CD4-positive, alpha-beta T cell (primary cell): ENCODE measurements at regions of chr4 and their contacts with region 1.

Region 1: GRCh38 chr4:4260253-4260652 is 12.2 kb upstream of the TMEM128 start:
- DNase-seq: peak in 4 of 14 experiments; percentile 11 to 82 (median 76)
- ATAC-seq: peak; percentile 100
- H3K4me3 ChIP-seq: no peak overlapping the region
- H3K4me3 Mint-ChIP-seq: no peak overlapping the region
- H3K27ac ChIP-seq: no peak overlapping the region
- H3K27ac Mint-ChIP-seq: no peak overlapping the region
- H3K4me1 ChIP-seq: peaks cover 10% of the 10 kb centered on the region
- H3K4me1 Mint-ChIP-seq: peaks cover 7% of the 10 kb centered on the region
- H3K27me3 ChIP-seq: no peaks in the 10 kb centered on the region
- H3K27me3 Mint-ChIP-seq: no peaks in the 10 kb centered on the region
- CTCF ChIP-seq: peak; percentile 71

Region 2: DNA sequence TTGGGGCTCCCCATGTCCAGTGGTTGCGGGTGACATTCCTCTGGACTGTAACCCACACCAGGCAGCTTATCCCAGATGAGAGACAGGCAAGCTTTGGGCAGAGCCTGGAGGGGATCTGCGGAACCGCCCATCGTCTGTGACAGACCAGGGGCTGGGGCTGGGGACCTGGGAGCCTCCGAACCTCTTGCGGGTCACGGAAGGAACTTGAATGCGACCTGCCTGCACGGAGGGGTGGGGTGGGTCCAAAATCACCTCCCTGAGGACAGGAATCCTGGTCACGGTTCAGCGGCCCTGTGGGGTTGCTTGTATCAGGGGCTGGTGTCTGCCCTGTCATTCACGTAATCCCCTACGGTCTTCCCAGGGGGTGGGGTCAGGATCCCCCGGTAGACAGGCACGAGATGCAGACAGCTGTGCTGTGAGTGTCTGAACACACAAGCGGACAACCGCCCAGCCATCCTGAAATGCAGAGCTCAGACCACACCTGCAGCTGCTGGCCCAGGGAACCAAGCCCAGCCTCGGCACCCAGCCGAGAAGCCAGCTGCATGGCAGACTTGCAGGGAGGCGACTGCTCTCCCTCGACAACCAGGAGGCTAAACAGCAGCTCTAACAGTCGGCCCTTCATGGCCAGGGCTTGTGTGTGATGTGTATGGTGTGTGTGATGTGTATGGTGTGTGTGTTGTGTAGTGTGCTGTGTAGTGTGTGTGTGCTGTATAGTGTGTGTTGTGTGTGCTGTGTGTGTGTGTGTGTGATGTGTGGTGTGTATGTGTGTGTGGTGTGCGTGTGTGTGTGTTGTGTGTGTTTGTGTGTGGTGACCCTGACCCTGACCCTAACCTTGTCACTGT is 599.9 kb before region 1 on chr4:
- CTCF ChIA-PET with region 1: no interaction called
- POLR2A ChIA-PET with region 1: no interaction called
- intact Hi-C with region 1: no loop called
- DNase-seq: no peak
- ATAC-seq: no peak
- H3K4me3 ChIP-seq: no peak overlapping the region
- H3K4me3 Mint-ChIP-seq: no peak overlapping the region
- H3K27ac ChIP-seq: no peak overlapping the region
- H3K27ac Mint-ChIP-seq: no peak overlapping the region
- H3K4me1 ChIP-seq: no peaks in the 10 kb centered on the region
- H3K4me1 Mint-ChIP-seq: no peaks in the 10 kb centered on the region
- H3K27me3 ChIP-seq: peaks cover 2 to 13% of the 10 kb centered on the region in 2 experiments
- H3K27me3 Mint-ChIP-seq: peaks cover 30% of the 10 kb centered on the region
- CTCF ChIP-seq: no peak

Region 3: GRCh38 chr4:4289941-4290850 is 29.9 kb after region 1 on chr4 and contains the starts of genes LYAR and ZBTB49:
- CTCF ChIA-PET with region 1: interaction called, 10 read pairs
- POLR2A ChIA-PET with region 1: no interaction called
- intact Hi-C with region 1: no loop called
- DNase-seq: peak; percentile 94 to 98 (median 96)
- ATAC-seq: peak; percentile 92
- H3K4me3 ChIP-seq: peak within 1 kb of the TSS; percentile 87
- H3K4me3 Mint-ChIP-seq: peak within 1 kb of the TSS; percentile 98
- H3K27ac ChIP-seq: peak within 1 kb of the TSS; percentile 55 to 72
- H3K27ac Mint-ChIP-seq: peak within 1 kb of the TSS; percentile 92
- H3K4me1 ChIP-seq: peaks cover 49% of the 10 kb centered on the region
- H3K4me1 Mint-ChIP-seq: peaks cover 65% of the 10 kb centered on the region
- H3K27me3 ChIP-seq: no peaks in the 10 kb centered on the region
- H3K27me3 Mint-ChIP-seq: no peaks in the 10 kb centered on the region
- CTCF ChIP-seq: no peak
- total RNA-seq, gene LYAR: 13.8 to 13.9 TPM
- total RNA-seq, gene ZBTB49: 6.6 to 8.8 TPM

Region 4: DNA sequence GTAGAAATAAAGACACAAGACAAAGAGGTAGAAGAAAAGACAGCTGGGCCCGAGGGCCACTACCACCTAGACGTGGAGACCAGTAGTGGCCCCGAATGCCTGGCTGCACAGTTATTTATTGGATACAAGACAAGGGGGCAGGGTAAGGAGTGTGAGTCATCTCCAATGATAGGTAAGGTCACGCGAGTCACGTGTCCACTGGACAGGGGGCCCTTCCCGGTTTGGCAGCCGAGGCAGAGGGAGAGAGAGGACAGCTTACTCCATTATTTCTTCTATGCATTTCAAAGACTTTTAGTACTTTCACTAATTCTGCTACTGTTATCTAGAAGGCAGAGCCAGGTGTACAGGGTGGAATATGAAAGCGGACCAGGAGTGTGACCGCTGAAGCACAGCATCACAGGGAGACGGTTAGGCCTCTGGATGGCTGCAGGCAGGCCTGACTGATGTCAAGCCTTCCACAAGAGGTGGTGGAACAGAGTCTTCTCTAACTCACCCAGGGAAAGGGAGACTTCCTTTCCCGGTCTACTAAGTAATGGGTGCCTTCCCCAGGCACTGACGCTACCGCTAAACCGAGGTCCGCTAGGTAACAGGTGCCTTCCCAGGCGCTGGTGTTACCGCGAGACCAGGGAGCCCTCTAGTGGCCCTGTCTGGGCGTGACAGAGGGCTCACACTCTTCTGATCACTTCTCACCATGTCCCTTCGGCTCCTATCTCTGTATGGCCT is 74.7 kb after region 1 on chr4:
- CTCF ChIA-PET with region 1: interaction called, 8 read pairs
- POLR2A ChIA-PET with region 1: interaction called, 3 read pairs
- intact Hi-C with region 1: loop called in 1 of 2 experiments (anchors 1 kb)
- DNase-seq: peak; percentile 59 to 88 (median 69)
- ATAC-seq: peak; percentile 90
- H3K4me3 ChIP-seq: no peak overlapping the region
- H3K4me3 Mint-ChIP-seq: no peak overlapping the region
- H3K27ac ChIP-seq: no peak overlapping the region
- H3K27ac Mint-ChIP-seq: no peak overlapping the region
- H3K4me1 ChIP-seq: peaks cover 7% of the 10 kb centered on the region
- H3K4me1 Mint-ChIP-seq: peaks cover 14% of the 10 kb centered on the region
- H3K27me3 ChIP-seq: no peaks in the 10 kb centered on the region
- H3K27me3 Mint-ChIP-seq: no peaks in the 10 kb centered on the region
- CTCF ChIP-seq: peak; percentile 81

Region 5: DNA sequence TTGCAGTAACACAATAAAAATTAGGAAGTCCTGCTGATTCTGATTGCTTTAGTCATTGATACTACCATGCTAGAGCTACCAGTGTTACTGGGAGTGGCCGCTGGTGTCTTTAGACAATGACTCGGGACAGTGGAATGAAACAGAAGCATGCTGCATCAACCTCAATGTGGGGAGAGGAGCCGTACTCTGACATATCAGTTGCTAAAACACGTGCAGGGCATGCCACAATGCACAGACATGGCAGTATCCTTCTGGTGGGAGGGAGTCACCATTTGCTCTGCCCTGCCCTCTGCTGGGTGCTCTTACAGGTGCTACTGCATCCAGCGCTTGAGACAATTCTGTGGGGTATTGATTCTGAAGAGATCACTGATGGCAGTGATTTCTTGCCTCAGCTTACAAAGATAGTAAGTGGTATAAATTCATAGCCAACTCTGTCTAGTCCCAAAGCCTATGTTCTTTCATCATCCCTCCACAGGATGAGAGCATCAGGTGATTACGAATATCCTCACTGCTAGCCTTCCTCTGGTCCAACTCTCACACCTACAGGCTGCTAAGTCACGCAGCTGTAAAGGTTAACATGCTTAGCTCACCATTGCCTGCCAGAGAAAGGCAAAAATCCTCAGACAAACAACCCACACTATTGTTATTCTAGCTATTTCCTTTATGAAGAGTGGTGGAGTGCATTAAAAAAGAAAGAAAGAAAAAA is 170.4 kb after region 1 on chr4:
- CTCF ChIA-PET with region 1: interaction called, 4 read pairs
- POLR2A ChIA-PET with region 1: no interaction called
- intact Hi-C with region 1: loop called (anchors 1 to 2 kb)
- DNase-seq: peak in 13 of 14 experiments; percentile 19 to 73 (median 47)
- ATAC-seq: peak; percentile 99
- H3K4me3 ChIP-seq: no peak overlapping the region
- H3K4me3 Mint-ChIP-seq: no peak overlapping the region
- H3K27ac ChIP-seq: no peak overlapping the region
- H3K27ac Mint-ChIP-seq: no peak overlapping the region
- H3K4me1 ChIP-seq: peaks cover 4% of the 10 kb centered on the region
- H3K4me1 Mint-ChIP-seq: peaks cover 16% of the 10 kb centered on the region
- H3K27me3 ChIP-seq: no peaks in the 10 kb centered on the region
- H3K27me3 Mint-ChIP-seq: no peaks in the 10 kb centered on the region
- CTCF ChIP-seq: peak; percentile 74

Region 6: GRCh38 chr4:4541661-4542570 is 281.7 kb after region 1 on chr4 and contains the start of gene STX18:
- CTCF ChIA-PET with region 1: no interaction called
- POLR2A ChIA-PET with region 1: no interaction called
- intact Hi-C with region 1: no loop called
- DNase-seq: peak; percentile 74 to 93 (median 86)
- ATAC-seq: peak; percentile 92
- H3K4me3 ChIP-seq: peak within 1 kb of the TSS; percentile 92
- H3K4me3 Mint-ChIP-seq: peak within 1 kb of the TSS; percentile 98
- H3K27ac ChIP-seq: peak within 1 kb of the TSS; percentile 58 to 81
- H3K27ac Mint-ChIP-seq: peak within 1 kb of the TSS; percentile 97
- H3K4me1 ChIP-seq: peaks cover 32% of the 10 kb centered on the region
- H3K4me1 Mint-ChIP-seq: peaks cover 69% of the 10 kb centered on the region
- H3K27me3 ChIP-seq: no peaks in the 10 kb centered on the region
- H3K27me3 Mint-ChIP-seq: no peaks in the 10 kb centered on the region
- CTCF ChIP-seq: no peak
- total RNA-seq, gene STX18: 15.2 to 15.5 TPM

Region 7: DNA sequence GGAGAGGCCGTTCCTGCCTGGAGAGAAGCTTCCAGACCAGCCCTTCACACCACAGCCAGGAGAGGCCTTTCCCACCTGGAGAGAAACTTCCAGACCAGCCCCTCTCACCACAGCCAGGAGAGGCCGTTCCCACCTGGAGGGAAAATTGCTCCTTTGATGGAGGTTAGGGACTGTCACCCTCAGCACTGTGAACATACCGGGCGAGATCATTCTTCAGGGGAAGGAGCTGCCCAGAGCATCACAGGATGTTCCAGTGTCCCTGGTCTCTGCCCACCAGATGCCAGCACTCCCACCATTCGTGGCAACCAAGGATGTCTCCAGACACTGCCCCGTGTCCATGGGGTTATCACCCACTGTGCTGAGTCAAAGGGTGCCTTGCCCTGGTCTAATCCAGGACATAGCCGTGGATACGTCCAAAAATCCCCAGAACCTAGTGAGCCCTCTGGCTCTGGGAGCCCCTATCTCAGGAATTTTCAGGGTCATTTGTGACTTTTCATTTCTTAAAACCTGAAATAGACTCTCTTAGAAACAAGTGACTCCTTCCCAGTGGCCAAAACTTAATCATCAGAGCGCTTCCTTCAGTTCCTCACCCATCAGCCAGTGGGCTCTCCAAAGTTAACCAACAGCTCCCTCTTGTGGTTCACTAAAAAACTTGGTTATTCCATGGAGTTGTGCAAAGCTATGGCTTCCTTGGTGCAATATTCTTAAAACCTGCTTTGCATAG is 1552.4 kb after region 1 on chr4:
- CTCF ChIA-PET with region 1: no interaction called
- POLR2A ChIA-PET with region 1: no interaction called
- intact Hi-C with region 1: loop called in 1 of 2 experiments (anchors 5 kb)
- DNase-seq: peak in 4 of 14 experiments; percentile 13 to 56 (median 48)
- ATAC-seq: no peak
- H3K4me3 ChIP-seq: no peak overlapping the region
- H3K4me3 Mint-ChIP-seq: no peak overlapping the region
- H3K27ac ChIP-seq: no peak overlapping the region
- H3K27ac Mint-ChIP-seq: no peak overlapping the region
- H3K4me1 ChIP-seq: no peaks in the 10 kb centered on the region
- H3K4me1 Mint-ChIP-seq: no peaks in the 10 kb centered on the region
- H3K27me3 ChIP-seq: no peaks in the 10 kb centered on the region
- H3K27me3 Mint-ChIP-seq: peaks cover 9% of the 10 kb centered on the region
- CTCF ChIP-seq: peak; percentile 29